Left lung (tissue), 14 donors: ENCODE measurements at regions of chr21 and their contacts with region 1.

Region 1: DNA sequence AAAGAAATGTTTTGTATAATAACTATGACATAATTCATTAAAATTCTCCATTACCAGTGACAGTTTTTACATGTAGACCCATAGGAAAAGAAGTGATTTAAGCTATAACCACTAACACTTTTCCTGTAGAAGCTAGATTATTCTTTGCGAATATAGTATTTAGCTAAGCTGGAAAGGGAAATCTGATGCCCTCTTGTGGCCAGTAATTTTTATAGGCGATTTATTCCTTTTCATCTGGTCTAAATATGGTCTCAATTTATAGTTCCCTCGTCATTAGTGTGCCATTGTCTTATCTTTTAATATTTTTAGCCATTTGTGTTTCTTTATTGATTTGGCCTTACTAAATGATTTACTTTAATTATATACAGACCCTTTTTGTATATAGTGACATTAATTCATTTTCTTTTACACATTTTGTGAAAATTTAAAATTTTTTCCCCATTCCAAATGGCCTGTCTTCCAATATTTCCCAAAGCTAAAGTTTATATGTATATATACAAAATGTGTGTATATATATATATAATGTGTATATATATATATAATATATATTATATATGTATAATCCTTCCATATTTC is 26.7 kb downstream of the BTG3 start:
- DNase-seq: peak in 2 of 4 donors; percentile 42 to 63
- ATAC-seq: peak; percentile 57
- H3K4me3 ChIP-seq: no peak overlapping the region
- H3K27ac ChIP-seq: no peak overlapping the region
- H3K4me1 ChIP-seq: no peaks in the 10 kb centered on the region
- H3K27me3 ChIP-seq: no peaks in the 10 kb centered on the region
- CTCF ChIP-seq: peak; percentile 35 to 55

Region 2: GRCh38 chr21:17387030-17387617 is 198.8 kb before region 1 on chr21:
- intact Hi-C with region 1: loop called in 1 of 2 experiments (anchors 10 kb)
- DNase-seq: peak in 2 of 4 donors; percentile 67 to 73
- ATAC-seq: peak; percentile 89
- H3K4me3 ChIP-seq: no peak overlapping the region
- H3K27ac ChIP-seq: no peak overlapping the region
- H3K4me1 ChIP-seq: no peaks in the 10 kb centered on the region
- H3K27me3 ChIP-seq: no peaks in the 10 kb centered on the region
- CTCF ChIP-seq: peak; percentile 53 to 65

Region 3: DNA sequence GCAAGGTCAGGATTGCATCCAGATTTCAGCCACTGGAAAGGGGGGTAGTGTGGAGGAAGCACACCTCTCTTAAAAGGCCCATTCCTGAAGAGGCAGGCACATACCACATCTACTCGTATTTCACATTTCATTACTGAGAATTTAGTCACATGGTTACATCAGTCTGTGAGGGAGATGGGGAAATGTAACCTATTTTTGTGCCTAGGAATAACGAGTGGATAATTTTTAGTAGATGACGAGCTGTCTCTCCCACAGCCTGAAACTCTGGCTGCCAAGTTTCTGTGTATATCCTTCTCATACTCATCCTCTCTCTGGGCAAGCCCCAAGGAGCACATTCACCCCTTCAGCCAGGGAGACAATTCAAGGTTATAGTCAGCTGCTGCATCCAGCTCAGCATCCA is 243.5 kb after region 1 on chr21:
- intact Hi-C with region 1: no loop called
- DNase-seq: no peak
- ATAC-seq: no peak
- H3K4me3 ChIP-seq: no peak overlapping the region
- H3K27ac ChIP-seq: no peak overlapping the region
- H3K4me1 ChIP-seq: no peaks in the 10 kb centered on the region
- H3K27me3 ChIP-seq: no peaks in the 10 kb centered on the region
- CTCF ChIP-seq: no peak